ENCODE measurements at regions of chr6 and their contacts with region 1.

Region 1: GRCh38 chr6:114407426-114408035 is 64.7 kb upstream of the HS3ST5 start:
- DNase-seq: no peak
- H3K4me3 ChIP-seq: no peak overlapping the region
- H3K27ac ChIP-seq: no peak overlapping the region
- H3K4me1 ChIP-seq: peaks cover 0 to 6% (median 1%) of the 10 kb centered on the region in 4 experiments; a peak in 4 of 7 replicates
- H3K27me3 ChIP-seq: no peaks in the 10 kb centered on the region
- CTCF ChIP-seq: peak in 1 of 3 experiments; percentile 3; a peak in 1 of 4 replicates
- EP300 ChIP-seq: no peak
- POLR2A ChIP-seq: no peak
- RAD21 ChIP-seq: no peak

Region 2: DNA sequence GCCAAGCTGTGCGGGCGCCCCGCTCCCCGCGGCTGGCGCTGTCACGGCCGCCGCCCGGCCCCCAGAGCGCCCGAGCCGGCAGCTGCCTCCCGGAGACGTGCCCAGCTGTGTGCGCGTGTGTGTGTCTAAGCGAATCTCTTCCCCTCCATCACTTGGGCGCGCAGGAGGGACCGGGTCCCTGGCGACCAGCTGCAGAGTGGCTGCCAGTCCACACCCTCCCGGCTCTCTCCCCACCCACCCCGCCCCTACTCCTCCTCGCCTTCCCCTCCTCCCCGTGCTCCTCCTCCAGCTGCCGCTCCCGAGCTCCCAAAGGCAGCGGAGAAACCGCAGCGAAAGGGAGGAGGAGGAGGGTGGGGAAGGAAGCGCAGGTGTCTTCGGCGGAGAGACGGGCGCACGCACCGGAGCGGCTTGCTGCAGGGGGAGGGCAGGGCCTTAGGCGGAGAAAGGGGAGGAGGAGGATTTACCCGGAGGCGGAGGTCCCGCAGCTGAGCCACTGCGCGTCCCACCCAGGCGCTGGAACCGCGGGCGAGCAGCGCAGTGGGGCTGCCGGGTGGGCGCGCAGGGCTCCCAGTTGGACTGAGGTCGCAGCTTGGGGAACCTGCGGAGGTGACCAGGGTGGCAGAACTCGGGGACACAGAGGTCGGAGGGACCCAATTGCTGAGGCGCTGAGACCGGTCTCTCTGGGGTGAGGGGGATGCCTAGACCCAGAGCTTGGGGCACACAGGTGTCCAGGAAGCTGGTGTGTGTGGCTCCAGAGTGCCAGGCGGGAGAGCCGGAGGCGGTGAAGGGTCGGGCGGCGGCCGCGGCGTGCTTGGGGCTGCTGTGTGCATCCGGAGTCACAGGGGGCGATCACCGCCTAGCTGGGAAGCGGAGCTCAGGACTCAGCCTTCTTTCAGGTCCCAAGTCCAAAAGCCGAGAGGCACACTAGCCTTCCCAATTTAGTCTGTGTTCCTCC is 64.4 kb before region 1 on chr6 and contains the start of gene HS3ST5:
- CTCF ChIA-PET with region 1: interaction called, 4 read pairs
- POLR2A ChIA-PET with region 1: interaction called, 50 read pairs
- DNase-seq: peak in 1 of 2 experiments; percentile 89
- H3K4me3 ChIP-seq: peak within 1 kb of the TSS; percentile 80 to 98 (median 82)
- H3K27ac ChIP-seq: peak within 1 kb of the TSS; percentile 56
- H3K4me1 ChIP-seq: peaks cover 0 to 15% (median 7%) of the 10 kb centered on the region in 4 experiments; a peak in 4 of 7 replicates
- H3K27me3 ChIP-seq: no peaks in the 10 kb centered on the region
- CTCF ChIP-seq: peak; percentile 76 to 84 (median 83)
- EP300 ChIP-seq: 0 out of 3 replicates have a peak, but pooled peaks of 1 of the 2 experiments have one; percentile 32
- POLR2A ChIP-seq: 0 out of 3 replicates have a peak, but pooled peaks of 1 of the 2 experiments have one; percentile 67
- RAD21 ChIP-seq: peak; percentile 88 to 90
- total RNA-seq, gene HS3ST5: 9.9 and 11.2 TPM in 2 replicates

Region 3: DNA sequence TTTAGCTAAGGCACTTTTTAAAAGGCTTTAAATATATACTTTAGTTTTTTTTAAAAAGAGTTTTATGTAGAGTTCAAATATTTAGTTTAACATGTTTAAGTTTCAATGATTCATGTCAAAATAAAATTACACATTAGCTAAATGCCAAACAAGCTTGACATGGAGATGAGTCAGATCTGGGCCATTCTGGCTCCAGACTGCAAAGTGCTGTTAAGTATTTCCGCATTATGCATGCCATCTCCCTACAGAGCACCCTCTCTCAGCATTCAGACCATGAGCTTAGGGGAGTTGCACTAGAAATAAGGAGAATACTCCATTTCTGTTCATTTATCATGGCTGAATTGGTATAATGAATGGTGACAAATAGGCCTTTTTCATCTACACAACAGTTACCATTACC is 43.2 kb before region 1 on chr6:
- CTCF ChIA-PET with region 1: interaction called, 4 read pairs
- POLR2A ChIA-PET with region 1: interaction called, 35 read pairs
- DNase-seq: no peak
- H3K4me3 ChIP-seq: no peak overlapping the region
- H3K27ac ChIP-seq: no peak overlapping the region
- H3K4me1 ChIP-seq: peaks cover 0 to 21% (median 11%) of the 10 kb centered on the region in 4 experiments; a peak in 6 of 7 replicates
- H3K27me3 ChIP-seq: no peaks in the 10 kb centered on the region
- CTCF ChIP-seq: no peak
- EP300 ChIP-seq: no peak
- POLR2A ChIP-seq: no peak
- RAD21 ChIP-seq: no peak

Region 4: GRCh38 chr6:114390176-114390575 is 17.4 kb before region 1 on chr6:
- CTCF ChIA-PET with region 1: no interaction called
- POLR2A ChIA-PET with region 1: interaction called, 19 read pairs
- DNase-seq: no peak
- H3K4me3 ChIP-seq: no peak overlapping the region
- H3K27ac ChIP-seq: no peak overlapping the region
- H3K4me1 ChIP-seq: peaks cover 3 to 17% (median 4%) of the 10 kb centered on the region in 4 experiments; a peak in 4 of 7 replicates
- H3K27me3 ChIP-seq: no peaks in the 10 kb centered on the region
- CTCF ChIP-seq: no peak
- EP300 ChIP-seq: no peak
- POLR2A ChIP-seq: no peak
- RAD21 ChIP-seq: no peak

Region 5: DNA sequence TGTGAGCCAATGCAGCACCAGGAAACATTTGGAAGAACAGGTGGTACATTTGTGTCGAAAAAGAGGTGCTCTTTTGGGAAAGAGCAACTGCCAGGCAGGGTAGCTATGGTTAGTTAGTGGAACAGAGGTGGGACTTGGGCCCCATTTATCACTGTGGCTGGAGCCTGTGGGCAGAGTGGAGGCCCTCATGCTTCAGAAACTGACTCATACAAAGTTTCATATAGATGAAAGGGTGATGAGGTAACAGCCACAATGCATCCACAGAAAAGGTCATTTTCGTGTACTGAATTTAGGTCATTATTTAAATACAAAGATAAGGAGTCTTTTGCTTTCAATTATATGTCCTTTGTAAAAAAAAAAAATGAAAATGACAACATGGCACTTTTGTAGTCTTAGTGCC is 11.6 kb after region 1 on chr6:
- CTCF ChIA-PET with region 1: interaction called, 3 read pairs
- POLR2A ChIA-PET with region 1: interaction called, 74 read pairs
- DNase-seq: no peak
- H3K4me3 ChIP-seq: no peak overlapping the region
- H3K27ac ChIP-seq: no peak overlapping the region
- H3K4me1 ChIP-seq: peaks cover 6 to 16% (median 11%) of the 10 kb centered on the region in 4 experiments; a peak in 5 of 7 replicates
- H3K27me3 ChIP-seq: no peaks in the 10 kb centered on the region
- CTCF ChIP-seq: no peak
- EP300 ChIP-seq: no peak
- POLR2A ChIP-seq: no peak
- RAD21 ChIP-seq: no peak

Region 6: GRCh38 chr6:114430534-114431124 is 23.1 kb after region 1 on chr6:
- CTCF ChIA-PET with region 1: interaction called, 3 read pairs
- POLR2A ChIA-PET with region 1: interaction called, 14 read pairs
- DNase-seq: no peak
- H3K4me3 ChIP-seq: peak overlapping the region in 1 of 4 experiments; percentile 28; a peak in 1 of 8 replicates
- H3K27ac ChIP-seq: 0 out of 2 replicates have a peak overlapping the region, but pooled peaks have one; percentile 2
- H3K4me1 ChIP-seq: peaks cover 3 to 24% (median 8%) of the 10 kb centered on the region in 4 experiments; a peak in 5 of 7 replicates
- H3K27me3 ChIP-seq: no peaks in the 10 kb centered on the region
- CTCF ChIP-seq: no peak
- EP300 ChIP-seq: no peak
- POLR2A ChIP-seq: no peak
- RAD21 ChIP-seq: no peak